Activated naive CD4-positive, alpha-beta T cell treated with anti-CD3 and anti-CD28 coated beads for 36 hours (primary cell): ENCODE measurements at regions of chr6 and their contacts with region 1.

Region 1: DNA sequence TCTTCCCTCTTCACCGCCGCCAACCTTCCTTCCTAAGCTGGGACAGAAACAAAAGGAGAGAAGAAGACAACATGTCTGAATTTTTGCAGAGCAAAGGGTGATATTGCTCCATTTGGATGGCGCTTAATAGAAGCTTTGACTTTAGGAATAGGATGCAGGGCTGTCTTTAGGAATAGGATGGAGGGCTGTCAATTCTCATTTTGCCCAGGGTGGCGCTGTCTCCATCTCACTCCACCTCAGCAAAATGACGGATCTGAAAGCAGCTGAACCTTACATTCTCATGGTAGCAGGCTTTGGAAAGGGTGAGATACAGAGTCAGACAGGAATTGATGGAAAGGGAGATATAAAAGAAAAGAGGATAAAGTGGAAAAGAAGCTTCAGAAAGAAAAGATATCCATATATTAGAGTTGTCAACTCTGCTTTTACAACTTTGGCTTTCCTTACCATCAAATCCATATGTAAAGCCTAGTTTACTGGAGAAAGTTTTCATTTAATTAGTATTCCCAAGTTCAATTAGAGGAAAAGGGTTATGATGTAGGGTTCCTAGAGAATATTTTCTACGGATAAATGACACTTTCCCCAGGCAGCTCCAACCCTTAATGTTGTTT is 2.4 kb downstream of the MTCL3 start:
- DNase-seq: peak; percentile 66
- H3K4me3 Mint-ChIP-seq: peak overlapping the region; percentile 85
- H3K27ac Mint-ChIP-seq: peak overlapping the region; percentile 68
- H3K4me1 Mint-ChIP-seq: peaks cover 30% of the 10 kb centered on the region
- H3K27me3 Mint-ChIP-seq: peaks cover 33% of the 10 kb centered on the region

Region 2: DNA sequence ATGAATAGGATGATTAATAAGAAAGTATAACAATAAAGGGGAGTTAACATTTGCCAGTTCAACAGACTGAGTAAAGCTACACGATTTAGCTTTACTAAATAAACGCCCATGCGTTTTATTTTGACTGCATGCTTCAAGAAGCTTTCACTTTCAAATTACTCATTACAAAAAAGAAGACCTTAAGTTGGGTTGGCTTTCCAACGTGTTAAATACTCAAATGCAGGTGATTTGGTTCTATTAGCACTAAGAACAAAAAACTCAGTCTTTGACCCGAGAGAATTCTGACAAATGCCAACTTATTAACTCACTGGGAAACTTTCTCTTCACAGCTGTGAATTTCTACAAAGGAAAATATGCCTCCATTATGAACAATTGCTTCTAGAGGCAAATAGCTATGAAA is 225.3 kb before region 1 on chr6:
- CTCF ChIA-PET with region 1: interaction called, 4 read pairs
- intact Hi-C with region 1: loop called (anchors 1 kb)
- DNase-seq: no peak
- H3K4me3 Mint-ChIP-seq: no peak overlapping the region
- H3K27ac Mint-ChIP-seq: no peak overlapping the region
- H3K4me1 Mint-ChIP-seq: peaks cover 47% of the 10 kb centered on the region
- H3K27me3 Mint-ChIP-seq: no peaks in the 10 kb centered on the region

Region 3: DNA sequence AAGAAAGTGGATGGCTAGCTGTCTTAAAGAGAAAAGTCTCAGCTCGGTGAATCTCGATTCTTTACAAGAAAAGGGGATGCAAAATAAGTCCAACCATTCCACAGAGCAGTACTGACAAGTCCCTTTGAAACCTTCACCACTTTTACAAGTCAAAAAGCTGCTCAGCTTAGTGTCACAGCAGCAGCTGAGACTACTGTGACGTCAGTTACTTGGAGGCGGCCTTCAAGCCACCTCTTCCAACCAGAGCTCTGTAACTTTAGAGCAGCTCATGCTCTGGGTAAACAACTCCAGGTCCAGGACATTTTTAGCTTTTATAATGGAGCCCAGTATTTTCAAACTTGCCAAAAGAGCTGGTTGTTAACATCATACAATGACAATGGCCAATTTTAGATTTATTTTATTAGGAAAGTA is 57.5 kb before region 1 on chr6 and contains the start of gene KIAA0408:
- CTCF ChIA-PET with region 1: interaction called, 10 read pairs
- intact Hi-C with region 1: no loop called
- DNase-seq: no peak
- H3K4me3 Mint-ChIP-seq: no peak within 1 kb of the TSS
- H3K27ac Mint-ChIP-seq: no peak within 1 kb of the TSS
- H3K4me1 Mint-ChIP-seq: no peaks in the 10 kb centered on the region
- H3K27me3 Mint-ChIP-seq: no peaks in the 10 kb centered on the region
- total RNA-seq, gene KIAA0408: 2.0 to 3.1 TPM

Region 4: DNA sequence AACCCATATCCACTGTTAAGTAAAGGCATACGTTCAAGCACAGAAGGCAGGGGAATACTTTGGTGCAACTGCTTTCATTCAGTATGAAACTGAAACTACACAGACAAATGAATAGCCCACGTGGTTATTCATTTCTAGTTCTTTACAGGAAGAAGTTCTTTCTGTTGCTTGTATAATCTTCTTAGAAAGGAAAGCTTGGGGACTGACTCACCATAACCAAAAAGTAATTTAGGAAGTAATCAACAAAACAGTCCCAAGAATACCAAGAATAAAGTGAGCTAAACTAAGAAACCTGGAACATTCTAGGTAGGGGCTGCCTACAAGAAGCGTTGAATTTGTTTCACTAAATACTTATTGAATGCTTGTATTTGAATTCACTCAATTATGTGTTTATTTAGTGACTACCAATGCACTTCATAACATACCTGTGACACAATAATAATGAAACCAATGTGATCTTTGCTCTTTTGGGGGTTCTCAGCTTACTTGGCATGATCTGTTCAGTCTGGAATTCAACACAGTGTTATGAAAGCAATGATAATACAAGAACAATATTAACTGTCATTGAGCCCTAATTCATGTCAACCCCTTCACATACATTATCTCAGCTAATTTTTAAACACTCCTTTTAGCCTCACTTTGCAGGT is 32.4 kb before region 1 on chr6:
- CTCF ChIA-PET with region 1: interaction called, 34 read pairs
- intact Hi-C with region 1: loop called (anchors 1 kb)
- DNase-seq: peak; percentile 11
- H3K4me3 Mint-ChIP-seq: no peak overlapping the region
- H3K27ac Mint-ChIP-seq: no peak overlapping the region
- H3K4me1 Mint-ChIP-seq: peaks cover 28% of the 10 kb centered on the region
- H3K27me3 Mint-ChIP-seq: peaks cover 4% of the 10 kb centered on the region

Region 5: GRCh38 chr6:127762284-127762683 is 245.5 kb after region 1 on chr6:
- CTCF ChIA-PET with region 1: no interaction called
- intact Hi-C with region 1: loop called (anchors 5 kb)
- DNase-seq: peak; percentile 58
- H3K4me3 Mint-ChIP-seq: no peak overlapping the region
- H3K27ac Mint-ChIP-seq: peak overlapping the region; percentile 12
- H3K4me1 Mint-ChIP-seq: peaks cover 58% of the 10 kb centered on the region
- H3K27me3 Mint-ChIP-seq: no peaks in the 10 kb centered on the region